Prostate gland (tissue), 2 donors: ENCODE measurements at regions of chr15 and their contacts with region 1.

Region 1: DNA sequence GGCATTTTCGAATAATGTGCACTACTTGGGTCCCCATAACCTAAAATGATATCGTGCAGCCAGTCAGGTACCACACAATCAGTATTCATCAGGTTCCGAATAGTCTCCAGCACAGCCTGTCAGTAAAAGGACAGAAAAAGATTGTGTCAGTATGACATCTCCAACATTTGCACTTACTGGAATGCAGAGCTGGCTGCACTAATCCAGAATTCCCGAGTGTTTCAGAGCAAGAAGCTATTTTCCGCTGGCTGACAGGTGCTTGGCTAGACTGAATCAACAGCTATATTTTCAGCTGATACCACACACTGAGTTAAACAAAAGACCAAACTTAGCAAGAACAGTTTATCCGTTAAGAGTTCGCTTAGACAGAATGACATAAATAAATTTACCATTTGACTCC is 68.8 kb downstream of the AQR start:
- DNase-seq: no peak
- H3K4me3 ChIP-seq: no peak overlapping the region
- H3K27ac ChIP-seq: no peak overlapping the region
- H3K4me1 ChIP-seq: no peaks in the 10 kb centered on the region
- H3K27me3 ChIP-seq: no peaks in the 10 kb centered on the region
- CTCF ChIP-seq: no peak
- POLR2A ChIP-seq: no peak

Region 2: GRCh38 chr15:34616613-34617012 is 284.1 kb before region 1 on chr15:
- intact Hi-C with region 1: loop called (anchors 10 kb)
- DNase-seq: no peak
- H3K4me3 ChIP-seq: no peak overlapping the region
- H3K27ac ChIP-seq: no peak overlapping the region
- H3K4me1 ChIP-seq: no peaks in the 10 kb centered on the region
- H3K27me3 ChIP-seq: no peaks in the 10 kb centered on the region
- CTCF ChIP-seq: no peak
- POLR2A ChIP-seq: no peak

Region 3: DNA sequence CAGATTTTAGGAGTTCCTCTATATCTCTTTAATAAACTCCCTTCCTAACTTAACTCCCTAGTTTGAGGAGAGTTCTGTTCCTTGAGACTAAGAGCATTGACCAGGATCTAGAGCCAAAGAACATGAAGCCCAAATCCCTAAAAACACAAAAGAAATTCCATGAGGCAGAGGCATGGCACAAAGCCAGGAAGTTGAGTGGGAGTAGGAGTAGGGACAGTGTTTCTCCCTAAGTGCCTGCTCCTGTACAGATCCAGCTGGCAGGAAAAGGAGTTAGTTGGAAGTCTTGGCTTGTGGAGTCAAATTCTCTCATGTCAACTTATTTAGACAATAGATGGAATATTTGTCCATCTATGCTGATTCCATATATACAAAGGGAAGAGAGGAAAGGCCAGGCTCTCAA is 116.8 kb before region 1 on chr15:
- intact Hi-C with region 1: loop called (anchors 10 kb)
- DNase-seq: no peak
- H3K4me3 ChIP-seq: no peak overlapping the region
- H3K27ac ChIP-seq: no peak overlapping the region
- H3K4me1 ChIP-seq: no peaks in the 10 kb centered on the region
- H3K27me3 ChIP-seq: no peaks in the 10 kb centered on the region
- CTCF ChIP-seq: no peak
- POLR2A ChIP-seq: no peak